ENCODE measurements at regions of chr1 and their contacts with region 1.

Region 1: DNA sequence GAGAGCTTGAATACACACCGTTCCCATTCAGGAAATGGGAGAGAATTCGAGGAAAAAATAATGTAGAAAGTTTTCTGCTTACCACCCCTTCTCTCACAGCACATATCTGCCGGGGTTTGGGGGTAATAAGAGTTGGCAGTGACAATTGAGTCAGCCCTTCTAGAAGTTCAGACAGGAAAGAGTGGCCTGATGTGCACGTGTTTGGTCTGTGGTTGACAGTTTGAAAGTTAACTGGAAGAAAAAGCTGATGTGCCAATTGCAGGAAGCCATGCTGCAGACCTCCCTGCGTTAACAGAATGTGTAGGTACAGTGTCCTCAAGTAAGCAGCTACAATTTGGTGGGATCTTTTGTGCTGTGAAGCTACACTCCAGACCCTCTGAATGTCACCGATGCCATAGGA is 50.9 kb downstream of the DHX9 start:
- DNase-seq: no peak
- H3K4me3 Mint-ChIP-seq: no peak overlapping the region
- H3K27ac Mint-ChIP-seq: no peak overlapping the region
- H3K4me1 Mint-ChIP-seq: peaks cover 10% of the 10 kb centered on the region
- H3K27me3 Mint-ChIP-seq: no peaks in the 10 kb centered on the region
- CTCF ChIP-seq: no peak

Region 2: DNA sequence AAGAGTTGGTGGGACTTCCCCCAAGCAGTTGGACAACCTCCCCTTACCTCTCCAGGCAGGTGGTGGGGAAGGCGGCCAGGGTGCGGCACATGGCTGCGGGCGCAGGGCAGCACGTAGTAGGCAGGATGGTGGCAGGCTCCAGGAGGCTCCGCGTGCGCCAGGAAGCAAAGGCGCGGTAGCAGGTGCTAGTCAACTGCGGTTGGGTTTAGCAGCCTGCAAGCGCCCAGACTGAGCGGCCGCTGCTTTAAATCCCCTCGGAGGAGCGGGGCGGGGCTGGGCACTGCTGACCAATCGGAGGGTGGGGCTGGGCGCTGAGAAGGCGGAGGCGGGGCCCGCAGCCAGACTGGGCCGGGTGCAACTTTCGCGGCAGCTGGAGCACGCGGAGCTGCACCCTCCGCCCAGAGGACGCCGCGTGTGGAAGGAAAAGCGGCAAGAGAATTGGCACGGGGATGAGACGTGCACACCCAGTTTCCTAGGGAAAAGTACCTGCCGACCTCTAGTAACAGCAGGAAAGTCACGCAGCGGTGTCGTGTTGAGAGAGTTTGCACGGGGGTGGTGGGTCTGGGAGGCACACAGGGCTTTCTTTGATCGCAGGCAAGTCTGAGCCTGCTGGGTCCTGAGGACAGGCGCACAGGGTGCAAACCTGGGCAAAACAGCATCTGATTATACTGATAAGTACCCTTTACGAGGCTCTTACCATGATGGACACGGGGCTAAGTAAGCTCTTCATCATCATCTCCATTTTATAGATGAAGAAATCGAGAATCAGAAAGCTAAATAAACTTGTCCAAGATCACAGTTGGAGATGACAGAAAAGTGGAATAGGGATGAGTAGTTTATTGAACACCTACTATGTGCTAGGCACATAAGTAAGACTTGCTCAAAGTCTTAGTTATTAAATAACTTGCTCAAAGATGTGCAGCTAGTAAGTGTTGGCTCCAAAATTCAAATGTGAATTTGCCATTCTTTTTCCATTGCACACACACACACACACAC is 285.5 kb before region 1 on chr1 and contains the start of gene RGS16:
- CTCF ChIA-PET with region 1: no interaction called
- intact Hi-C with region 1: no loop called
- DNase-seq: peak; percentile 95
- H3K4me3 Mint-ChIP-seq: peak within 1 kb of the TSS; percentile 77
- H3K27ac Mint-ChIP-seq: no peak within 1 kb of the TSS
- H3K4me1 Mint-ChIP-seq: peaks cover 7% of the 10 kb centered on the region
- H3K27me3 Mint-ChIP-seq: peaks cover 30% of the 10 kb centered on the region
- CTCF ChIP-seq: no peak
- total RNA-seq, gene RGS16: 1.2 and 1.7 TPM in 2 replicates

Region 3: DNA sequence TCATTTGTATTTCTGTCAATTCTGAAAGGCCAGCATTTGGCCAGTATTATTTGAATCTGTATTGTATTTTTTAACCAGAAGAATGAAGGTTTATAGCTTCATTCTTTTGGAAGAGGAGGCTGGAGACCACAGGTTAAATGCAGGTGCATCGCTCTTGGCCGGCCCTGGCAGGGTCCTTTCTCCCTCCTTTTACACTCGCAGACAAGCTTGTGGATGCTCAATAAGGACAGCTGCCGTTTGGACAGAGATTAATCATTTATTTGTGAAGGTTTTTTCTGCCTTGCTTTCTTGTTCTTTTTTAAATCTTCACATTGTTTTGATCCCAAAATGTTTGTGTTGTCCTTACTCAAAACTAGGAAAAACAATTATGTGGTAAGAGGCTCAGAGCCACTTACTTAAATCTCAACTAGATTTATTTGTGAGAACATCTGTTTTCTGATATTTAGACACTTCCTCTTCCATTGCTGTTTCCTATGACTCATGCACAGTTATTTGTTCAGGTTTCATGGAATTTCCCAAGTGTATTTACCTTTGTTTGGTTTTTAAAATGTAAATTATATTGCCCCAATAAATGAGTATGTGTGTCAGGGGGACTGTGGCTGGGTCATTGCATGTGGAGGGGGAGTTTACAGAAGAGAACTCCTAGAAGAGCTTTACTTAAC is 249.4 kb after region 1 on chr1:
- CTCF ChIA-PET with region 1: no interaction called
- intact Hi-C with region 1: loop called (anchors 5 kb)
- DNase-seq: no peak
- H3K4me3 Mint-ChIP-seq: peak overlapping the region; percentile 42
- H3K27ac Mint-ChIP-seq: peak overlapping the region; percentile 93
- H3K4me1 Mint-ChIP-seq: peaks cover 30% of the 10 kb centered on the region
- H3K27me3 Mint-ChIP-seq: no peaks in the 10 kb centered on the region
- CTCF ChIP-seq: no peak